Heart right ventricle (tissue), 16 donors: ENCODE measurements at regions of chr3 and their contacts with region 1.

Region 1: GRCh38 chr3:172750368-172751174 is at the start of gene ECT2:
- DNase-seq: peak; percentile 98 to 99
- ATAC-seq: peak; percentile 98 to 100 (median 99)
- H3K4me3 ChIP-seq: peak within 1 kb of the TSS; percentile 67 to 87 (median 80)
- H3K27ac ChIP-seq: peak within 1 kb of the TSS; percentile 11 to 91 (median 84)
- H3K4me1 ChIP-seq: peaks cover 0 to 31% (median 19%) of the 10 kb centered on the region in 9 donors
- H3K27me3 ChIP-seq: no peaks in the 10 kb centered on the region
- CTCF ChIP-seq: peak; percentile 59 to 89 (median 80)
- total RNA-seq, gene ECT2: 2.9 to 8.0 (median 5.5) TPM

Region 2: DNA sequence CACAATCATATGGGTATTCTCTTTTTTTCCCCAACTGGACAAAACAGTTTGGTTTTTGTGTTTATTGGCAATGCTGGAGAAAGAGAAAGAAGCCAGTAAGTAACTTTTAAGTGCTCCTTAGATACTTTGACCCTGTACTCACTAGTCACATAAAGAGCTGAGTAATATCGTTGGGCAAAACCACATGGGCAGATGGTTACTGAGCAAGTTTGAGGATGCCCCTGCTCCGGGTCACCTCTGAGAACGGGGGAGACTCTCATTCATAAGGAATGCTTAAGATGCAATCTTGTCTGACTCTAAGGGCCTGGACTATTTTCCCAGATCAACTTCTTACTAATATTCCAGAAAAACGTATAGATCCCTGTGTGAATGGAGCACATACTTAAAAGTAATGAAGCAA is 1617.7 kb before region 1 on chr3:
- intact Hi-C with region 1: no loop called
- DNase-seq: no peak
- ATAC-seq: no peak
- H3K4me3 ChIP-seq: no peak overlapping the region
- H3K27ac ChIP-seq: no peak overlapping the region
- H3K4me1 ChIP-seq: peaks cover 0 to 5% (median 0%) of the 10 kb centered on the region in 9 donors
- H3K27me3 ChIP-seq: no peaks in the 10 kb centered on the region
- CTCF ChIP-seq: no peak

Region 3: GRCh38 chr3:172710664-172711453 is 39.7 kb before region 1 on chr3 and contains the start of gene NCEH1:
- intact Hi-C with region 1: loop called in 3 of 10 experiments (anchors 1 to 2 kb)
- DNase-seq: peak; percentile 86 to 92
- ATAC-seq: peak; percentile 97 to 99 (median 98)
- H3K4me3 ChIP-seq: peak within 1 kb of the TSS; percentile 59 to 99 (median 87)
- H3K27ac ChIP-seq: peak within 1 kb of the TSS; percentile 76 to 96 (median 90)
- H3K4me1 ChIP-seq: peaks cover 0 to 50% (median 21%) of the 10 kb centered on the region in 9 donors
- H3K27me3 ChIP-seq: no peaks in the 10 kb centered on the region
- CTCF ChIP-seq: peak; percentile 80 to 97 (median 88)
- total RNA-seq, gene NCEH1: 40.8 to 66.4 (median 51.8) TPM